Naive thymus-derived CD4-positive, alpha-beta T cell (primary cell): ENCODE measurements at regions of chr5 and their contacts with region 1.

Region 1: DNA sequence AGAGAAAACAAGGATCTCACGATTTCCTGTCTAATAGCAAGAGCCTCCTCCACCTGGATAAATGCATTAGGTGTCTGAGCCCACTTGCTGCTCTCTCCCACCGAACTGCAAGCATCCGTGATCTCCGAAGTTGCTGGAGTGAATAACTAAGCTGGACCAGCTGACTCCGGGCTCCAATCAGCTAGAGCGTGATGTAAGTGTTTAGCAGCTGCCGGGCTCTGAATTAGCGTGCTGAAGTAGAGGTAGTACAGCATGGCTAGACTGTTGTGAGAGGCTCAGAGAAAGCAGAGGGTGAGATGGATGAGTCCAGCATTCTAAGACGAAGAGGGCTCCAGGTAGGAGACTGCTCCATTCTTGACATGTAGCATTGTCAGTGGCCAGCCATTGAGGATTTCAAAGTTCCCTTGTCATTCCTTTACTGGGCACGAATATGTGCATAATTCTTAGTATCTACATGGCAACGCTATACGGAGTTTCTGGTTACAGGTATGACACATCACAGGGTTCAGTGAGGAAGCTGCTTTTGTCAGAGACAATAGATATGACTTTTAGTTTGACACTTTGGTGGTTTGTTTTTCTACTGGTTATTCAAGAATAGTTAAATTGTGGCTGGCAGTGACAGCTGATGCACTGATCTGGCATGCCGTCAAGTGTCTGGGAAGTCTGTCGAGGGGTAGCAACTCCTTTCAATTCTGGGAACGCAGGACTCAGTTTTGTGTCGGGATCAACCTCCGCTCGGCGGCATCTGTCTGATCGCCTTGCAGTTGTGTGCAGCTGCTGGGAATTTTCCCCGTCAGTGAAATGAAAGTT is 232.6 kb downstream of the MAST4 start:
- DNase-seq: peak; percentile 14 to 67 (median 55)
- ATAC-seq: peak; percentile 93
- H3K4me3 ChIP-seq: peak overlapping the region; percentile 36
- H3K4me3 Mint-ChIP-seq: peak overlapping the region; percentile 72 to 95 (median 84)
- H3K27ac ChIP-seq: peak overlapping the region; percentile 31
- H3K27ac Mint-ChIP-seq: peak overlapping the region; percentile 12 to 92 (median 71)
- H3K4me1 ChIP-seq: peaks cover 0 to 4% of the 10 kb centered on the region in 2 donors
- H3K4me1 Mint-ChIP-seq: peaks cover 12 to 69% (median 19%) of the 10 kb centered on the region in 7 donors
- H3K27me3 ChIP-seq: no peaks in the 10 kb centered on the region
- H3K27me3 Mint-ChIP-seq: peaks cover 0 to 50% (median 26%) of the 10 kb centered on the region in 5 donors

Region 2: DNA sequence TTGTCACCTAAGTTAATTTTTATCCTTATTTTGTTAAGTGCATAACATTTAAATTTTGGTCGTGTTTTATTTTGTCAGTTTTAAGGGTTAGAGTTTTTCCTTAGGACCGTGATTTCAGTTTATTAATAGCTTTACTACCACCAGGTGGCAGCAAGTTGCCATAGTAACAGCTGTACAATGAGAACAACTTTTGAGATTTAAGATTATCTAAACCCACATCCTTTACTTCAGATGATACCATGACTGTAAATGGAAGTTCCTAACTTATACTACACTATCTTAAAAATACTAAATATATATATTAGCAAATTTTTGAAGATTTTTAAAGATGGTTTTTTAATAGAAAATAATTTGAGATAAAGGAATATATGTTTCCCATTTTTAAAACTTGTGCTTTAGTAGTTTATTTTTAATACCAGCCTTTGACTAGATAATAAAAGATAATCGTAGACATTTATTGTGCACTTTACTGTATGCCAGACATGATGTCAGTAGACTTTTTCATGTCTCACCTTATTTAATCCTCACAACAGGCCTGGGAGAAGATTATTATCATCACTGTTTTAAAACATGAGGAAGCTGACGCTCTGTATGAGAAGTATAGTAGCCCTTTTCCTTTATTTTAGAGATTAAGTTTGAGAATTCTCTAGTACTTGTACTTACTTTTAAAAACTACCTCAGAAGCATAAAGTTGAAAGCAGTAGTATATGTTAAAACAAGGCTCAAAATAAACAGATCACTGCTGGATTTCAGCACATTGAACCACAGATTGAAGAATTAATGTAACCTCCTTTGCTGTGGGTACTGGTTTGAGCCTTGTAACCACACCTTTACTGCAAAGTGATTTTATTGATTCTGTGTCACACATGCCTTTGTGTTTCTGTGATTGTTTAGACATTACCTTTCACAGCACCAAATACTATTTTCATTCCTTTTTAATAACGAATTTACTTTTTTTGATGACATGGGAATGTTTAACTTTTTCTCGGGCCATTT is 657.1 kb before region 1 on chr5:
- CTCF ChIA-PET with region 1: no interaction called
- POLR2A ChIA-PET with region 1: no interaction called
- intact Hi-C with region 1: loop called (anchors 5 to 10 kb)
- DNase-seq: peak in 7 of 9 donors; percentile 69 to 85 (median 80)
- ATAC-seq: peak; percentile 89
- H3K4me3 ChIP-seq: no peak overlapping the region
- H3K4me3 Mint-ChIP-seq: peak overlapping the region in 6 of 10 donors; percentile 5 to 48 (median 38)
- H3K27ac ChIP-seq: peak overlapping the region; percentile 43
- H3K27ac Mint-ChIP-seq: peak overlapping the region; percentile 69 to 93 (median 90)
- H3K4me1 ChIP-seq: peaks cover 7 to 8% of the 10 kb centered on the region in 2 donors
- H3K4me1 Mint-ChIP-seq: peaks cover 9 to 39% (median 28%) of the 10 kb centered on the region in 7 donors
- H3K27me3 ChIP-seq: no peaks in the 10 kb centered on the region
- H3K27me3 Mint-ChIP-seq: no peaks in the 10 kb centered on the region

Region 3: GRCh38 chr5:66553916-66554575 is 274.7 kb before region 1 on chr5:
- CTCF ChIA-PET with region 1: no interaction called
- POLR2A ChIA-PET with region 1: no interaction called
- intact Hi-C with region 1: loop called in 1 of 2 experiments (anchors 10 kb)
- DNase-seq: peak in 1 of 9 donors; percentile 31
- ATAC-seq: peak; percentile 83
- H3K4me3 ChIP-seq: no peak overlapping the region
- H3K4me3 Mint-ChIP-seq: peak overlapping the region in 2 of 10 donors; percentile 22 to 56
- H3K27ac ChIP-seq: no peak overlapping the region
- H3K27ac Mint-ChIP-seq: peak overlapping the region in 1 of 9 donors; percentile 71
- H3K4me1 ChIP-seq: peaks cover 0 to 5% of the 10 kb centered on the region in 2 donors
- H3K4me1 Mint-ChIP-seq: peaks cover 0 to 27% (median 0%) of the 10 kb centered on the region in 7 donors
- H3K27me3 ChIP-seq: peaks cover 0 to 3% of the 10 kb centered on the region in 2 donors
- H3K27me3 Mint-ChIP-seq: peaks cover 0 to 14% (median 4%) of the 10 kb centered on the region in 5 donors

Region 4: GRCh38 chr5:66796305-66797292 is 32.2 kb before region 1 on chr5:
- CTCF ChIA-PET with region 1: no interaction called
- POLR2A ChIA-PET with region 1: no interaction called
- intact Hi-C with region 1: no loop called
- DNase-seq: no peak
- ATAC-seq: no peak
- H3K4me3 ChIP-seq: no peak overlapping the region
- H3K4me3 Mint-ChIP-seq: no peak overlapping the region
- H3K27ac ChIP-seq: no peak overlapping the region
- H3K27ac Mint-ChIP-seq: no peak overlapping the region
- H3K4me1 ChIP-seq: no peaks in the 10 kb centered on the region
- H3K4me1 Mint-ChIP-seq: no peaks in the 10 kb centered on the region
- H3K27me3 ChIP-seq: no peaks in the 10 kb centered on the region
- H3K27me3 Mint-ChIP-seq: peaks cover 11 to 68% (median 18%) of the 10 kb centered on the region in 5 donors

Region 5: GRCh38 chr5:66814146-66814991 is 14.4 kb before region 1 on chr5:
- CTCF ChIA-PET with region 1: interaction called, 5 read pairs
- POLR2A ChIA-PET with region 1: interaction called, 4 read pairs
- intact Hi-C with region 1: loop called (anchors 1 kb)
- DNase-seq: peak in 7 of 9 donors; percentile 19 to 51 (median 36)
- ATAC-seq: peak; percentile 73
- H3K4me3 ChIP-seq: no peak overlapping the region
- H3K4me3 Mint-ChIP-seq: no peak overlapping the region
- H3K27ac ChIP-seq: no peak overlapping the region
- H3K27ac Mint-ChIP-seq: peak overlapping the region in 1 of 9 donors; percentile 7
- H3K4me1 ChIP-seq: peaks cover 0 to 3% of the 10 kb centered on the region in 2 donors
- H3K4me1 Mint-ChIP-seq: peaks cover 0 to 34% (median 0%) of the 10 kb centered on the region in 7 donors
- H3K27me3 ChIP-seq: no peaks in the 10 kb centered on the region
- H3K27me3 Mint-ChIP-seq: peaks cover 0 to 15% (median 5%) of the 10 kb centered on the region in 5 donors

Region 6: GRCh38 chr5:66840511-66841013 is 11.8 kb after region 1 on chr5:
- CTCF ChIA-PET with region 1: interaction called, 3 read pairs
- POLR2A ChIA-PET with region 1: no interaction called
- intact Hi-C with region 1: loop called in 1 of 2 experiments (anchors 1 kb)
- DNase-seq: peak in 1 of 9 donors; percentile 39
- ATAC-seq: peak; percentile 73
- H3K4me3 ChIP-seq: no peak overlapping the region
- H3K4me3 Mint-ChIP-seq: peak overlapping the region in 1 of 10 donors; percentile 71
- H3K27ac ChIP-seq: no peak overlapping the region
- H3K27ac Mint-ChIP-seq: peak overlapping the region in 1 of 9 donors; percentile 93
- H3K4me1 ChIP-seq: no peaks in the 10 kb centered on the region
- H3K4me1 Mint-ChIP-seq: peaks cover 0 to 71% (median 0%) of the 10 kb centered on the region in 7 donors
- H3K27me3 ChIP-seq: no peaks in the 10 kb centered on the region
- H3K27me3 Mint-ChIP-seq: peaks cover 0 to 13% (median 7%) of the 10 kb centered on the region in 5 donors